Right ventricle myocardium superior (tissue), 1 donor: ENCODE measurements at regions of chr1 and their contacts with region 1.

Region 1: DNA sequence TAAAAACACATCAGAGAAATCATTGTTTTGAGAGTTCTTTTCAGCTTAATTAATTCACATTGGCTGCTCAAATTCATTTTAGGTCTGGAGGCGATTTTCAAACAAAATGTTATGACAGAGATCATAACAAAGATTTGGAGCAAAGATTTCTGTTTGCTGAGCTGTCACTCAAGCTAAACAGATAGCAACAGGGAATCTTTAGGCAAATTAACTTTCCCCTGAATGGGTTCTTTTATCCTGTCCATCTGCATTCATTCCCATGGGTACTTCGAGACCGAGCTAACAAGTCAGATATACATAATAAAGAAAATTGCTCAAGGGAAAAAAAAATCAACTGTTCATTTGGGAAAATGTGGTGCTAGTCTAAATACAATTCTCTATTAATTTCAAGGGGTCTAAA is 30.2 kb upstream of the CA6 start:
- DNase-seq: no peak
- ATAC-seq: no peak

Region 2: GRCh38 chr1:8987881-8988617 is 72.6 kb after region 1 on chr1:
- intact Hi-C with region 1: loop called (anchors 5 kb)
- DNase-seq: peak; percentile 70
- ATAC-seq: peak; percentile 71

Region 3: DNA sequence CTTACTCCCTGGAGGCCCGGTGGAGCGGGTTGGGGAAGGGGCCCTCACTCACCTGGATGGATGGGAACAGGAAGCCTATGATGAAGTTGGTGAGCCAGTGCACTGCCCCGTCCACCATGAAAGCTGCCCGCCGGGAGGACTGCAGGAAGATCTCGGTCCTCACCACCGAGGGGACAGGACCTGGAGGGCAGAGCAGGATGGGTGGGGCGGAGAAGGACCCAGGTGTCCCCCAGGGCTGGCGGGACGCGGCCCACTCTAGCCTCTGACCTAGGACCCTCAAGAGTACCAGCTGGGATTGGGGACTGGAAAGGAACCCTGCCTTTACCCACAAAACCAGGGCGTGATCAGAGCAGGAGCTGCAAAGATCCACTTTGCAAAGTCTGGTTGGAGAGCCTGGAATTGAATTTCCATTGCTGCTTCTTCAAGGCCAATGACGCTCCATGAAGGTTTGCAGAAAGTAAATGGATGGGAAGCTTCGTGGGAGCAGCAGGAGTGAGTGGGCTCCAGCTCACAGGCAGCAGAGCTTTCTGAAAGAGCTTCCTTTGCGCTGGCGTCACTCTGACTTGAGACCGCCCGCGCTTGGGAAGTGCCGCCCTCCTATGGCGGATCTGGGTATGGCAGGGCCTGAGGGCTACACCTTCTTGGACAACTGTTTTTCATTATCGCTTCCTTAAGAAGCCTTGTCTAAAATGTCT is 89.4 kb after region 1 on chr1:
- intact Hi-C with region 1: loop called (anchors 5 kb)
- DNase-seq: peak; percentile 89
- ATAC-seq: peak; percentile 91

Region 4: DNA sequence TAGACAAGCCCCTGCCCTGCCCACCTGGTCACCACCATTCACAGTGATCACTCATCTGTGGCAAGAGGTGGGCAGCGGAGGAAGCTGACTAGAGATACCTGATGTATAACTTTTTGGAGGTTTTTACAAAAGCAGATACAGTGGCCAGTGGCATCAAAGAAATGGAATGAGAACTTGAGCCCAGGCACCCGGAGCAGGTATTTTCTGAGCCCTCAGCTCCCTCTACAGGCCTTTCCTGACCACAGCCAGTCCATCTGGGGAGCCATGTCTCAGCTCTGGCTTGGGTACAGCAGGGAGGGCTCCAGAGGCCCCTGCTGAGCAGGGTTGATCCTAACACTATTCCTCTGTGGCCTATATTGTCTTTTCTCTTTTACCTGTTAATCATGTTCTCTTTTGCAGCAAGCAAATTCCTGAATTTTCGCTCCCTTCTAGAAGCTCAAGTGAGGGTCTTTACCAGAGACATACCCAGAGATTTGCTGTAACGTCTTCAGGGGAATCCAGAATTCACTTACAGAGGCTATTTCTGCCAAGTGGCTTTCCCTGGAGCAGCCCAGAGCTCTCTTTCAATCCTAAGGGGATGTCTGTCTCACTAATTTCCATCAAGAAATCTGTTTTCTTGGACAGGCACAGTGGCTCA is 186.2 kb after region 1 on chr1:
- intact Hi-C with region 1: loop called (anchors 5 kb)
- DNase-seq: no peak
- ATAC-seq: peak; percentile 64